Left ventricle myocardium superior (tissue), 1 donor: ENCODE measurements at regions of chr10 and their contacts with region 1.

Region 1: GRCh38 chr10:29998142-29998808 is 61.1 kb downstream of the JCAD start:
- DNase-seq: peak; percentile 72
- ATAC-seq: peak; percentile 55

Region 2: DNA sequence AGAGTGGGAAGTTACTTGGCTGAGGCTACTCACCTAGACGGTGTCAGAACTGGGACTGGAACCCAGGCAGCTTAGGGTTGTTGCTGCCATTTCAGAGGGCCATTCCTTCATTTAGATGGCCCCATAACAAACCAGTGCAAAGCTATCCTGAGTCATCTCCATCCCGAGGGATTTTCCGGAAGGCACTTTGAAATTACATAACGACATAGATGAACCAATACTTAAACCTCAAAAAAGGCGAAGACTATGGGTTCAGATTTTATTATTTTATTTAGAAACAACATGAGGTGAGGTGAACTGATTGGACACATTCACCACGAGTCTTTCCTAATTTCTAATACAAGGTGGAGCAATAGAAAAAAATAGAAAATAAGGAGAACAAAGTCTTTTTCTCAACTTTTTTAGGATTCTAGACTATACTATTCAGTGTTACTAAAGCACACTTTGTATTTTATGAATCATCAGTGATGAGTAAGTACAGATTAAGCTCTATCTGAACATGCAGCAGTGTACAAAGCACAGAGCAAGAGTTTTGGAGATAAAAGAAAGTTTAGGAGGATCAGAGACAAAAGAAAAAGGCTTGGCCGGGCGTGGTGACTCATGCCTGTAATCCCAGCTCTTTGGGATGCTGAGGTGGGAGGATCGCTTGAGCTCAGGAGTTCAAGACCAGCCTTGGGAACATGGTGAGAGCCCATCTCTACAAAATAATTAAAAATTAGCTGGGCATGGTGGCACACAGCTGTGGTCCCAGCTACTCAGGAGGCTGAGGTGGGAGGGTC is 284.0 kb before region 1 on chr10:
- intact Hi-C with region 1: no loop called
- DNase-seq: no peak
- ATAC-seq: no peak

Region 3: DNA sequence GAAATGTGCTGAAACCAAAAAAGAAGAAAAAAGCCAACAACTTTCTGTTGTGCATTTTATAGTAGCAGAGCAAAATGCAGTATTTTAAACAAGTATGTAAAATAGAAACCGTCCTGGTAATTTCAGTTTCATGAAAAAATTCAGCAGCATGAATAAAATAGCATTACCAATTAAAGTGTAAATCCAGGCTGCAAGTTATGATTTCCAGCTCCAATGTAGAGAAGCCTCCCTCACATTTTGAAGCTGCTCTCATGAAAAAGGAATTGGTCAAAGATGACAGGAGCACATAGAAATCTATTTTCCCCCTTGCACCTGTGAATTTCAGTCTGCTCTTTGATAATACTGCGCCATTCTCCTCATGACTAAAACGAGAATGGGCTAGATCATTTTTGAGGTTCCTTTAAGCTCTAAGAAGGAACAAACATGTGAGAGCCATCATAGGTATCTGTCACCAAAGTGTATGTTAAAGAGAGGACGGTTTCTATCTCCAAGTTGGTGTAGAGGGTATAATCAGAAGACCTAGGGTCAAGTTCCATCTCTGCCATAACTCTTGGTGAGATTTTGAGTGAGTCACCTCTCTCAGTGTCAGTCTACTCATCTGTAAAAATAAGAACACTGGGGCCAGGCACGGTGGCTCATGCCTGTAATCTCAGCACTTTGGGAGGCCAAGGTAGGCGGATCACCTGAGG is 243.3 kb after region 1 on chr10:
- intact Hi-C with region 1: loop called (anchors 5 kb)
- DNase-seq: no peak
- ATAC-seq: no peak

Region 4: GRCh38 chr10:30784897-30785605 is 786.8 kb after region 1 on chr10:
- intact Hi-C with region 1: no loop called
- DNase-seq: peak; percentile 89
- ATAC-seq: peak; percentile 81